Heart left ventricle (tissue), 16 donors: ENCODE measurements at regions of chr1 and their contacts with region 1.

Region 1: GRCh38 chr1:152459596-152460528 is 45.8 kb upstream of the CRNN start:
- DNase-seq: peak; percentile 43 to 79 (median 61)
- ATAC-seq: peak in 3 of 4 donors; percentile 67 to 71 (median 70)
- H3K4me3 ChIP-seq: peak overlapping the region in 7 of 12 donors; percentile 6 to 19 (median 10)
- H3K27ac ChIP-seq: peak overlapping the region in 6 of 12 donors; percentile 7 to 60 (median 18)
- H3K4me1 ChIP-seq: peaks cover 0 to 13% (median 2%) of the 10 kb centered on the region in 12 donors
- H3K27me3 ChIP-seq: peaks cover 0 to 7% (median 0%) of the 10 kb centered on the region in 9 donors
- CTCF ChIP-seq: peak; percentile 61 to 85 (median 76)
- POLR2A ChIP-seq: no peak

Region 2: DNA sequence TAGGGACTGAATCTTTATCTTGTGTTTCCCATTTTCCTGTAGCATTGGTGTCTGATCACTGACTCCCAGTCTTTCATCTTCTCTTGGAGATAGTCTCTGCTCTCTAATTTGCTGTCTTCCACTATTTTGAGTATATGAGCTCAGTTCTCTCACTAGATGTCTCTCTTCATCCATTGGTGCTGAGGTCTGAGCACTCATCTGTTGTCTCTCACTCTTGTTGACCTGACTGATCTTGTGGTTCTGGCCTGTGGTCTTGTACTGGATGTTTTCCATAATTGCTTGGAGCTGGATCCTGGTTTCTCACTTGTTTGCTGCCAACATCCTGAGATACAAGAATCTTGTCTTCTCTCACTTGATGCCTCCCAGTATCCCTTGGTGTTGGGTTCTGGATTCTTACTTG is 397.9 kb before region 1 on chr1:
- intact Hi-C with region 1: loop called in 1 of 10 experiments (anchors 5 kb)
- DNase-seq: no peak
- ATAC-seq: no peak
- H3K4me3 ChIP-seq: no peak overlapping the region
- H3K27ac ChIP-seq: no peak overlapping the region
- H3K4me1 ChIP-seq: no peaks in the 10 kb centered on the region
- H3K27me3 ChIP-seq: peaks cover 0 to 46% (median 7%) of the 10 kb centered on the region in 9 donors
- CTCF ChIP-seq: no peak
- POLR2A ChIP-seq: no peak

Region 3: DNA sequence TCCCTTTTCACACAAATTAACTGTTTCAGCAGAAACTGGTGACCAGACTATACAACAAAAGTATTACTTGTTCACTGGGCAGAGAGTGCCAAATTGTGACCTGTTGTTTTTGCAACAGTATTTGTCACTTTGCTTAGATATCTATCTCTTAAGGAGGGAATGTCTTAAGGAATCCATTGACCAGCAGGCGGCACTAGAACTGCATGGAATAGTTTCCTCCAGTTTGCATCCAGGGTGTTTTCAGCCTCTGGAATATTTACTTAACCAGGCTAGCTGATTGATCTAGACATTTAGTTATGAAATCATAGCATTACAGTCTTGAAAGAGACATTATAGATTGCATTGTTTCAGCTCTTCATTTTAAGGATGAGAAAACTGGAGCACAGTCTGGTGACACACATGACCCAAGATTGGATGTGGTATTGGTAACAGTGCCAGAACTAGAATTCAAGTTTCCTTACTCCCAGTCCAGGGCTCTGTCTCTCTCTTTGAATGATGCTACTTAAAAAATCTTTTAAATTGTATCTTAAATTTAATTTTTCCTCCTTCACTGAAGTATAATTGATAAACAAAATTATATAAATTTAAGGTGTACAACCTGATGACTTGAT is 317.8 kb before region 1 on chr1:
- intact Hi-C with region 1: loop called in 6 of 10 experiments (anchors 5 kb)
- DNase-seq: peak in 3 of 5 donors; percentile 24 to 45 (median 27)
- ATAC-seq: peak in 2 of 4 donors; percentile 46 to 55
- H3K4me3 ChIP-seq: no peak overlapping the region
- H3K27ac ChIP-seq: no peak overlapping the region
- H3K4me1 ChIP-seq: no peaks in the 10 kb centered on the region
- H3K27me3 ChIP-seq: peaks cover 0 to 31% (median 7%) of the 10 kb centered on the region in 9 donors
- CTCF ChIP-seq: peak; percentile 56 to 77 (median 66)
- POLR2A ChIP-seq: no peak

Region 4: GRCh38 chr1:152347116-152347728 is 112.6 kb before region 1 on chr1:
- intact Hi-C with region 1: loop called in 2 of 10 experiments (anchors 5 kb)
- DNase-seq: peak in 1 of 5 donors; percentile 8
- ATAC-seq: no peak
- H3K4me3 ChIP-seq: no peak overlapping the region
- H3K27ac ChIP-seq: no peak overlapping the region
- H3K4me1 ChIP-seq: no peaks in the 10 kb centered on the region
- H3K27me3 ChIP-seq: no peaks in the 10 kb centered on the region
- CTCF ChIP-seq: peak; percentile 64 to 91 (median 74)
- POLR2A ChIP-seq: no peak

Region 5: DNA sequence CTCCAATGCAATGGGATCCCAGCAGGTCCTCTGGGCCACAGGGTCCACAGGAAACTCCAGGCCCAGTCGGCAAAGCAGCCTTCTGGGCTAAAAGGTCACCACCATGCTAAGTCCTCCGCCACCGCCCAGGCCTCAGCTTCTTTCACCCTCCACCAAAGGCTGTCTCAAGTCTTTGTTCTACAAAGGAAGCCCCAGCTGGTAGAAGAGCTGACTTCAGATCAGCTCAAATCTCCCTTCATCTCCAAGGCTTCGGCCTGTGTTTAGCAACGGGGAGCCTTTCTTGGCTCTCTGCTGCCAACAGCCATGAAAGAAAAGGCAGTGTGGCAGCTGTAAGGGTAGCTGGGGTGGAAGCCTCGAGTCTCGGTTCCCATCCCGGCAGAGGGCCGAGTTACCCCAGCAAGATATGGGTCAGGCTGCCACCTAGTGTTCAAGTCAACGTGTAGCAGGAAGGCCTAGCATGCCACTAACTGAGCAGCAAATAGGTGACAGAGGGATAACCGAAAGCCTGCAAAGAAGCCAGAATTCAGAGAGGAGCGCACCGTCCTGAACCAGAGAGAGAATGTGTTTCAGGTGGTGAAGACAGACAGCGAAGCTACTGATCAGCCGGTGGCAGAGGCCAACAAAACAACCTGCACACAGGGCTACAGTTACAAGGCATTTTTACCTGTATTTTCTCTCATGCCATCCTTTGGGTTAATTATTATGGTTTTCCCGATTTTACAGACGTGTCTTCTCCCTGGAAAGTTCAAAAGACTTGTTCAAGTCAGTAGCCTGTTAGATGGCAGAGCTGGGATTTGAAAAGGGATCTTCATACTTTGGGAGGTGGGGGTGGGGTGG is 19.0 kb before region 1 on chr1:
- intact Hi-C with region 1: loop called in 1 of 10 experiments (anchors 2 kb)
- DNase-seq: peak; percentile 60 to 73 (median 68)
- ATAC-seq: peak; percentile 66 to 90 (median 83)
- H3K4me3 ChIP-seq: no peak overlapping the region
- H3K27ac ChIP-seq: no peak overlapping the region
- H3K4me1 ChIP-seq: peaks cover 0 to 31% (median 11%) of the 10 kb centered on the region in 12 donors
- H3K27me3 ChIP-seq: peaks cover 0 to 19% (median 0%) of the 10 kb centered on the region in 9 donors
- CTCF ChIP-seq: peak; percentile 71 to 84 (median 80)
- POLR2A ChIP-seq: no peak